Activated CD8-positive, alpha-beta T cell treated with anti-CD3 and anti-CD28 coated beads for 36 hours (primary cell): ENCODE measurements at regions of chr2 and their contacts with region 1.

Region 1: DNA sequence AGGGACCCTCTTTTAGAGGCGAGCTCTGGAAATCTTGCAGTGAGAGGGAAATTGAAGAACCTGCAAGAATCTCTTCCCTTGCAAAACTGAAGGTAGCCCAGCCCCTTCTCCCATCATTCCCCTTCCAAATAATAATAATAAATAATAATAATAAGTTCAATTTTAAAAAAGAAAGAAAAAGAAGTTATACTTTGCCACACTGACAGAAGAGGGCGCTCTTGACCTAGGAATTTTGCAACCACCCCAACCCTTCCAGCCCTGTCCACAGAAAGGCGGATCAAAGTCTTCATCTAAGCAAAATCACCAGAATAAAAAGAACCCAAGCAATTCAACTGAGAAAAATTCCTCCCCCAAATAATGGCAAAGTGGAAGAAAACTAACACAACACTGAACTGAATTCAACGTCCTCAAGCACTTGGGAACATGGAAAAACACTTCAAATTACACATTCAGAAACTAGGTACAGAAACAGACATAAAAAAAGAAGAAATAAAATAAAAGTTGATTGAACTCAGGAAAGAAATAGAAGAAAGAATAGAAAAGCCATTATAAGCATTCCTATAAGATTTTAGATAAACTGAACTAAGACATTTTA is 98.9 kb upstream of the GLS start:
- DNase-seq: peak; percentile 70
- ATAC-seq: peak; percentile 55
- H3K4me3 Mint-ChIP-seq: no peak overlapping the region
- H3K27ac Mint-ChIP-seq: no peak overlapping the region
- H3K4me1 Mint-ChIP-seq: peaks cover 25% of the 10 kb centered on the region
- H3K27me3 Mint-ChIP-seq: peaks cover 3% of the 10 kb centered on the region
- CTCF ChIP-seq: peak; percentile 82

Region 2: GRCh38 chr2:190718652-190719526 is 62.8 kb before region 1 on chr2:
- CTCF ChIA-PET with region 1: no interaction called
- POLR2A ChIA-PET with region 1: no interaction called
- intact Hi-C with region 1: no loop called
- DNase-seq: peak; percentile 83
- ATAC-seq: peak; percentile 59
- H3K4me3 Mint-ChIP-seq: peak overlapping the region; percentile 14
- H3K27ac Mint-ChIP-seq: peak overlapping the region; percentile 83
- H3K4me1 Mint-ChIP-seq: peaks cover 67% of the 10 kb centered on the region
- H3K27me3 Mint-ChIP-seq: no peaks in the 10 kb centered on the region
- CTCF ChIP-seq: no peak

Region 3: DNA sequence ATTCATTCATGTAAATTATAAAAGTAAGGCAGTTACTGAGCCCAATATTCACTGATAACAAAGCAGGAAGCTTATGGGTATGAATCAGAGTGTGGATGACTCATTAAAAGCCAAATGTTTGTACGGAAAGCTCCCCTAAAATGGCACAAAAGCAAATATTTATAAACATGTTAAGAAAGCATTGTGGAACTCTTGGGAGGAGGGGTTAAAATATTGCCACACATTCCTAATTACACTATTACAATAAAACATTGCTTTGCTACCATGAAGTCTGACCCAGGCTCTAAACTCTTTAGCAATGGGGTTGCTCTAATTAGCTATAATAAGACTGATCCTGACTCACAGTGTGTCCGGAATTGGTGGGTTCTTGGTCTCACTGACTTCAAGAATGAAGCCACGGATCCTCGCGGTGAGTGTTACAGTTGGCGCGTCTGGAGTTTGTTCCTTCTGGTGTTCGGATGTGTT is 21.9 kb before region 1 on chr2:
- CTCF ChIA-PET with region 1: interaction called, 10 read pairs
- POLR2A ChIA-PET with region 1: no interaction called
- intact Hi-C with region 1: no loop called
- DNase-seq: no peak
- ATAC-seq: no peak
- H3K4me3 Mint-ChIP-seq: peak overlapping the region; percentile 58
- H3K27ac Mint-ChIP-seq: peak overlapping the region; percentile 70
- H3K4me1 Mint-ChIP-seq: peaks cover 34% of the 10 kb centered on the region
- H3K27me3 Mint-ChIP-seq: no peaks in the 10 kb centered on the region
- CTCF ChIP-seq: no peak

Region 4: GRCh38 chr2:190804182-190804795 is 22.6 kb after region 1 on chr2:
- CTCF ChIA-PET with region 1: interaction called, 62 read pairs
- POLR2A ChIA-PET with region 1: no interaction called
- intact Hi-C with region 1: no loop called
- DNase-seq: peak; percentile 29
- ATAC-seq: no peak
- H3K4me3 Mint-ChIP-seq: no peak overlapping the region
- H3K27ac Mint-ChIP-seq: no peak overlapping the region
- H3K4me1 Mint-ChIP-seq: peaks cover 12% of the 10 kb centered on the region
- H3K27me3 Mint-ChIP-seq: no peaks in the 10 kb centered on the region
- CTCF ChIP-seq: peak; percentile 77

Region 5: DNA sequence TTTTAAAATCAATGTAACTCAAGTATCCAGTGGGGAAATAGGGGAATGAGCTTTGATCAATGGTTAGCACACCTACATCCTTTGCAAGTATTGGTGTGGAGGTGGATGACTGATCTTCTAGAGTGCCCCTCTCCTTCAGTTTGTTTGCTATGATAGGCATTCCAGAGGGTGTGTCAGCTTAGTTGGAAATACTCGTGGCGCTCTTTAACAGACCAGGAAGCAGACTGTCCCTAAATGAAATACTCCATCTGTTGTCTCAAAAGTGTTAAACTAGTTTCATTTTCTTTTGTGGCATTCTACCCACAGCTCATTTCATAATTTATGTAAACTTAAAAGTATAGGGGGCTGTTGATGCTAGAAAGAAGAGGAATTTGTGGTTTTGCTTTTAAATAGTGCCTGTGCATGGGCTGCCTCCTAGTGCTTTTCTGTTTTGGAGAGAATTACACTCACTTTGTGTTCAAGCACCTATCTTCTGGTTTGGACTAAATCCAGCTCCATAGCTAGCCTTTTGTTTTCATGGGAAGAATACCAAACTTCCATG is 166.1 kb after region 1 on chr2:
- CTCF ChIA-PET with region 1: interaction called, 29 read pairs
- POLR2A ChIA-PET with region 1: interaction called, 3 read pairs
- intact Hi-C with region 1: loop called (anchors 10 kb)
- DNase-seq: peak; percentile 36
- ATAC-seq: peak; percentile 81
- H3K4me3 Mint-ChIP-seq: no peak overlapping the region
- H3K27ac Mint-ChIP-seq: peak overlapping the region; percentile 70
- H3K4me1 Mint-ChIP-seq: peaks cover 22% of the 10 kb centered on the region
- H3K27me3 Mint-ChIP-seq: no peaks in the 10 kb centered on the region
- CTCF ChIP-seq: no peak